ENCODE measurements at regions of chr7 and their contacts with region 1.

Region 1: DNA sequence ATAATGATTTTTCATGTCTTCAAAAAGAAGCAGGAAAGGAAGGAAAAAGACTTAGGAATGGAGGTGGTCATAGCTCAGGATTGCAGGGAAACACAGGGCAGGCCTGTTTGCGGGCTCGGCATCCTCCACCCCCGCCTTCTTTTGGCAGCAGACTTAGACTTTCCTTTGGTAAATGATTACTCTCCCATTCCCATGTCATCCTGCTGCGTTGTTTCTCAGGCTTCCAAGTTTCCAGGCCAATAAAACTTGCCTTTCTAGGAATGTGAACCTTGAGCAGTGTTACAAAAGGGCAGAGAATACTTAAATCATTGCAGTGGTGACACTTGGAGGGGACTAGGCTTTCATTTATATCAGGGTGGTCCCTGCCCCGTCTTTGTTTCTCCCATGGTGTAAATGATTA is 34.0 kb upstream of the DGKB start:
- DNase-seq: no peak
- ATAC-seq: no peak
- H3K4me3 ChIP-seq: no peak overlapping the region
- H3K4me3 Mint-ChIP-seq: no peak overlapping the region
- H3K27ac ChIP-seq: no peak overlapping the region
- H3K27ac Mint-ChIP-seq: no peak overlapping the region
- H3K4me1 ChIP-seq: no peaks in the 10 kb centered on the region
- H3K4me1 Mint-ChIP-seq: no peaks in the 10 kb centered on the region
- H3K27me3 ChIP-seq: no peaks in the 10 kb centered on the region
- H3K27me3 Mint-ChIP-seq: no peaks in the 10 kb centered on the region

Region 2: DNA sequence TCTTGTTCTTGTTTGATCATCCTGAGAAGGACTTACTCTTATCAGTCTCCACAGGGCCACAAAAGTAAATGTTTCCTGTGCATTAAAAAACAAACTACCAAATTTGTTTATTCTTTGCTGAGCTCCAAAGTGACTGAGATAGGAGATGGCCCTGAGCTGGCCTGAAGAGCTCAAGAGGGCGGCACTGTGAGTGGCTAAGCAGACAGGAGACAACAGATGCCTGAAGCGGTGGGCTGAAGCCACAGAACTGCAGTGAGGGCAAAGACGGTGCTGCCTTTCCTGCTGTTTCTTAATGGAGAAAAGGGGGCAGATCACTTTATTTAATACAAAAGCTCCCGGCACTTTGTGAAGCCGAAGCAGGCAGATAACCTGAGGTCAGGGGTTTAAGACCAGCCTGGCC is 1869.5 kb before region 1 on chr7:
- CTCF ChIA-PET with region 1: interaction called in 1 of 2 experiments, 15 read pairs
- POLR2A ChIA-PET with region 1: no interaction called
- DNase-seq: no peak
- ATAC-seq: no peak
- H3K4me3 ChIP-seq: no peak overlapping the region
- H3K4me3 Mint-ChIP-seq: no peak overlapping the region
- H3K27ac ChIP-seq: no peak overlapping the region
- H3K27ac Mint-ChIP-seq: no peak overlapping the region
- H3K4me1 ChIP-seq: no peaks in the 10 kb centered on the region
- H3K4me1 Mint-ChIP-seq: no peaks in the 10 kb centered on the region
- H3K27me3 ChIP-seq: no peaks in the 10 kb centered on the region
- H3K27me3 Mint-ChIP-seq: peaks cover 0 to 6% of the 10 kb centered on the region in 2 donors

Region 3: DNA sequence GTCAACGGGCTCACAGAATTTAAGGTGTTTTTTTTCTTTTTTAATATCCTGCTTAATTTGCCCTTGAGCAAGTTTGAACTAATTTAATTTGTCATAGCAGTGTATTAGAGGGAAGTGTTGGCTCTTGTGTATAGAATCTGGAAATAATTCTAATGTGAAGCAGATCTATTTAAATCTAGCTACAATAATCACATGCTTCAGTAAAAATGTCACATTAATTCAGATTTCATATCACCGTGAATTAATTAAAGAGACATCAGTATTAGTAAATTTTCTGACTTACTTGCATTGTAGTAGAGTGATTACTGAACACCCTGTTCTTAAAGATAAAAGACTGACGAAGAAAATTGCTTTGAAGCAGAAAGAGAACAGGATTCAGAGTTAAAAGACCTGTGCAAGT is 158.7 kb before region 1 on chr7:
- CTCF ChIA-PET with region 1: no interaction called
- POLR2A ChIA-PET with region 1: no interaction called
- DNase-seq: no peak
- ATAC-seq: no peak
- H3K4me3 ChIP-seq: no peak overlapping the region
- H3K4me3 Mint-ChIP-seq: no peak overlapping the region
- H3K27ac ChIP-seq: no peak overlapping the region
- H3K27ac Mint-ChIP-seq: no peak overlapping the region
- H3K4me1 ChIP-seq: no peaks in the 10 kb centered on the region
- H3K4me1 Mint-ChIP-seq: no peaks in the 10 kb centered on the region
- H3K27me3 ChIP-seq: no peaks in the 10 kb centered on the region
- H3K27me3 Mint-ChIP-seq: no peaks in the 10 kb centered on the region

Measured in T-cell (primary cell).